ENCODE measurements at regions of chr20 and their contacts with region 1.

Region 1: GRCh38 chr20:1392823-1393506 is at the start of gene FKBP1A:
- DNase-seq: peak; percentile 93 to 97
- ATAC-seq: peak; percentile 98 to 99 (median 98)
- H3K4me3 ChIP-seq: peak within 1 kb of the TSS; percentile 88
- H3K27ac ChIP-seq: peak within 1 kb of the TSS; percentile 83
- H3K4me1 ChIP-seq: peaks cover 54% of the 10 kb centered on the region
- H3K27me3 ChIP-seq: peaks cover 0 to 15% (median 2%) of the 10 kb centered on the region in 3 donors
- CTCF ChIP-seq: no peak
- total RNA-seq, gene FKBP1A: 78.4 to 166 (median 98.2) TPM

Region 2: DNA sequence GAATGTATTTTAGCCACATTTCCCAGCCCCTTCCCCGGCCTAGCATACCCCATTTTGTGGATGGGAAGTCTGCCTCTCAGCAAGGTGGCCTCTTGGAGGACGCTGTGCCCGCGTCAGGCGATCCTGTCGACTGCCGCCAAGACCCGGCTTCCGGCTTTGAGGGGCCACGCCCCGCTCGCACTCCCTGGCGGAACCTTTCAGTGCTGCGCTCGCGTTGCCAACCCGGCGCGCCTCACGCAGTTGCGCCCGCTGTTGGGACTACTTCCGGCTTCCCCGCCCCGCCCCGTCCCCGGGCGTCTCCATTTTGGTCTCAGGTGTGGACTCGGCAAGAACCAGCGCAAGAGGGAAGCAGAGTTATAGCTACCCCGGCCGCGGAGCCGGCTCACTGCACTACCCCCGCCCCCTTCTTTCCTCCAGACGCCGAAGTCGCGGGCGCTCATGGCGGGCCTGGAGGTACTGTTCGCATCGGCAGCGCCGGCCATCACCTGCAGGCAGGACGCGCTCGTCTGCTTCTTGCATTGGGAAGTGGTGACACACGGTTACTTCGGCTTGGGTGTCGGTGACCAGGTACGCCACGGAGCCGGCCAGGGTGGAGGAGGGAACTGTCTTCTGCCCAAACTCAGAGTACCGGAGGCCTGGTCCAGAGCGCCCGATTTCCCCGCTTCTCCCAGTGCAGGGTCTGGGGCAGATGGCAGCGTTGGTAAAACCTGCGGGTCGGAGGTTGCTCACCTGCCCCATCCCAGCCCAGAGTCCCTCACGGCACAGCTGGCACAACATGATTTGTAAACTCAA is 274.4 kb before region 1 on chr20 and contains the start of gene PSMF1:
- intact Hi-C with region 1: loop called in 1 of 2 experiments (anchors 5 kb)
- DNase-seq: peak; percentile 96 to 97
- ATAC-seq: peak; percentile 98 to 99 (median 98)
- H3K4me3 ChIP-seq: peak within 1 kb of the TSS; percentile 98
- H3K27ac ChIP-seq: peak within 1 kb of the TSS; percentile 85
- H3K4me1 ChIP-seq: peaks cover 50% of the 10 kb centered on the region
- H3K27me3 ChIP-seq: no peaks in the 10 kb centered on the region
- CTCF ChIP-seq: peak; percentile 14
- total RNA-seq, gene PSMF1: 137 to 159 (median 144) TPM

Region 3: GRCh38 chr20:1313236-1313964 is 79.6 kb before region 1 on chr20:
- intact Hi-C with region 1: loop called in 1 of 2 experiments (anchors 5 kb)
- DNase-seq: peak; percentile 77 to 83
- ATAC-seq: peak; percentile 82 to 97 (median 90)
- H3K4me3 ChIP-seq: peak overlapping the region; percentile 41
- H3K27ac ChIP-seq: peak overlapping the region; percentile 0
- H3K4me1 ChIP-seq: no peaks in the 10 kb centered on the region
- H3K27me3 ChIP-seq: no peaks in the 10 kb centered on the region
- CTCF ChIP-seq: peak; percentile 98

Region 4: GRCh38 chr20:1325173-1326030 is 67.6 kb before region 1 on chr20:
- intact Hi-C with region 1: loop called (anchors 1 to 5 kb)
- DNase-seq: peak; percentile 98 to 99
- ATAC-seq: peak; percentile 86 to 90 (median 90)
- H3K4me3 ChIP-seq: peak overlapping the region; percentile 72
- H3K27ac ChIP-seq: peak overlapping the region; percentile 93
- H3K4me1 ChIP-seq: peaks cover 71% of the 10 kb centered on the region
- H3K27me3 ChIP-seq: no peaks in the 10 kb centered on the region
- CTCF ChIP-seq: no peak

Region 5: DNA sequence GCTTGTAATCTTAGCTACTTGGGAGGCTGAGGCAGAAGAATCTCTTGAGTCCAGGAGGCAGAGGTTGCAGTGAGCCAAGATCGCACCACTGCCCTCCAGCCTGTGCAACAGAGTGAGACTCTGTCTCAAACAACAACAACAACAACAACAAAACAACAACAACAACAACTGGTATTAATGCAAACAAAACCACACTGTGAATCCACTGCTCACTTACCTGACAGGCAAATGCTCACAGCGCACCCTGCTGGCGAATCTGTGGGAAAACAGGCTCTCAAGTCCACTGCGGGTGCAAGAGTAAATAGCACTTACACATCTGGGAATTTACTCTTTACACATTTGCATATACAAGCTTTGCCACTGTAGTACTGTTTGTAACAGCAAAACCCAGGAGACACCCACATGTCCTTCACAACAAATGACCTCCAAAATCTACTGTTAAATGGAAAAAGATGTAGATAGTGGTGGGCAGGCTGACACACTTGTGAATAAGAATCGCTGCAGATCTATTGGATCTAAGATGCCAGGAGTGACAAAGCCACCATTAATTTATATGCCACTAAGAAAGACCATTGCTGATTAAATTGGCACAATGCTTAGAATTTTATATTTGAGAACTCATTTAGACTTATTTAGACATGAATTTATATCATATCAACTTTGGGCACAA is 44.4 kb after region 1 on chr20:
- intact Hi-C with region 1: loop called in 1 of 2 experiments (anchors 5 kb)
- DNase-seq: peak; percentile 67 to 87
- ATAC-seq: peak; percentile 66 to 87 (median 72)
- H3K4me3 ChIP-seq: no peak overlapping the region
- H3K27ac ChIP-seq: no peak overlapping the region
- H3K4me1 ChIP-seq: no peaks in the 10 kb centered on the region
- H3K27me3 ChIP-seq: no peaks in the 10 kb centered on the region
- CTCF ChIP-seq: peak; percentile 82

Region 6: DNA sequence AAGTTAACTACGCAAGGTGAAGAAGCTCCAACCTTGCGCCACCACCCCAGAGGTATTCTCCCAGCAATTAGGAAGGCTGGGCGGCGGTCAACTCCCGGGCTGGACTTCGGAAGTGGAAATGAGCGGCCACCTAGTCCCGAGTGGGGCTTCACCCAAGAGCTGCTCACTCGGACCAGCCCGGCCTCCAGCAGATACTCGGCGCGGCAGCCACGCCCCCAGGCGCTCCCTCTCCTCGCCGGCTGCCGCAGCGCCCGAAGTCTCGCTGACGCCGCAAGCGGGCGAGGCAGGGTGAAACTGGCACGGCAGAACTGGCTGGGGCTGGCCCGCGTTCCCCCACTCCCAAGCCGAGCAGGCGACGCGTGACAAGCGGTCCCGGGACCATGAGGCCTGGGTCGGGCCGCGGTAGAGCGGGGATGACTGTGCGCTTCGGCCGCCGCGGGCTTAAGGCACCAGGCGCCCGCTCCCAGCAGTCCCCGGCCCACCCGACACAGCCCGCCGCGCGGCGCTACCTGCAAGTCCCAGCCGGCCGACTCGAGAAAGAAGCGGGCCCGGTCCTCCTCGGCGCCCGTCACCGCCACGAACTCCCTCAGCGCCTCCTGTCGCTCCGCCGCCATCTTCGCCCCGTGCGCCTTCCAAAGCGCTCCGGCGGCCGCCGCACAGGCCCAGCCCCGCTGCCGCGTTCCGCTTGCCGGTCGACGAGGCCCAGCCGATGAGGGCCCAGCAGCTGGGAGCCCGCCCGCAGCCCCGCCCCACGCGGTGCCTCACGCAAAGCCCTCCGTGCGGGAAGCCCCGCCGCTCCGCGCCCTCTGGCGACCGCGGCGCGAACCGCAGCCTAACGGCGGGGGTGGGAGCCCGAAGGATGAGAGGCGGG is 73.5 kb after region 1 on chr20 and contains the start of gene NSFL1C:
- intact Hi-C with region 1: loop called in 1 of 2 experiments (anchors 5 kb)
- DNase-seq: peak; percentile 97 to 98
- ATAC-seq: peak; percentile 97 to 98 (median 98)
- H3K4me3 ChIP-seq: peak within 1 kb of the TSS; percentile 80
- H3K27ac ChIP-seq: peak within 1 kb of the TSS; percentile 90
- H3K4me1 ChIP-seq: peaks cover 27% of the 10 kb centered on the region
- H3K27me3 ChIP-seq: no peaks in the 10 kb centered on the region
- CTCF ChIP-seq: peak; percentile 99
- total RNA-seq, gene NSFL1C: 99.9 to 135 (median 118) TPM

Measured in psoas muscle (tissue), 8 donors.